IMR-90 (cell line): ENCODE measurements at regions of chr7 and their contacts with region 1.

Region 1: DNA sequence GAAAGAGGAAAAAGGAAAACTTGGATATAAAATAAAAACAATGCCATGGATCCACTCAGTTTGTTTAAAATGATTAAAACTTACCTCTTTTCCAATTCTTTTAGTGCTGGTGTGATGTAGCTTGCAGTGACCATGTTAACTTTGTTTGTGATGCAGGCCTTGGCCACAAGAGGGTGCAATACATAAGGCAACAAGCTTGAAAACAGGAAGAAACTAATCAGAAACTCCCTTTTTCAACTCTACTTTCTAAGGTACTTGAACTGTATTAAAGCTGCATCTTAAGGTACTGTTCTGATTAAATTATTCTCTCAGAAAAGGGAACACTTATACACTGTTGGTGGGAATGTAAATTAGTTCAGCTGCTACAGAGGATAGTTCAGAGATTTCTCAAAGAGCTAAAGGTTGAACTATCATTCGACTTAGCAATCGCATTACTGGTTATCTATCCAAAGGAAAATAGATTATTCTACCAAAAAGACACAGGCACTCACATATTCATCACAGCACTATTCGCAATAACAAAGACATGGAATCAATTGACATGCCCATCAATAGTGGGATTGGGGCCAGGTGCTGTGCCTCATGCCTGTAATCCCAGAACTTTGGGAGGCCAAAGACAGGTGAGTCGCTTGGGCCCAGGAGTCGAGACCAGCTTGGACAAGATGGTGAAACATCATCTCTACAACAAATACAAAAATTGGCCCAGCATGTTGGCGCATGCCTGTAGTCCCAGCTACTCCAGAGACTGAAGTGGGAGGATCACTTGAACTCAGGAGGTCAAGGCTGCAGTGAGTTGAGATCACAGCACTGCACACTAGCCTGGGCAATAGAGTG is 50.9 kb downstream of the AASS start:
- DNase-seq: peak; percentile 82
- ATAC-seq: peak; percentile 82
- H3K4me3 ChIP-seq: no peak overlapping the region
- H3K27ac ChIP-seq: no peak overlapping the region
- H3K4me1 ChIP-seq: no peaks in the 10 kb centered on the region
- H3K27me3 ChIP-seq: no peaks in the 10 kb centered on the region
- CTCF ChIP-seq: peak; percentile 79
- POLR2A ChIP-seq: no peak
- RAD21 ChIP-seq: peak; percentile 73

Region 2: DNA sequence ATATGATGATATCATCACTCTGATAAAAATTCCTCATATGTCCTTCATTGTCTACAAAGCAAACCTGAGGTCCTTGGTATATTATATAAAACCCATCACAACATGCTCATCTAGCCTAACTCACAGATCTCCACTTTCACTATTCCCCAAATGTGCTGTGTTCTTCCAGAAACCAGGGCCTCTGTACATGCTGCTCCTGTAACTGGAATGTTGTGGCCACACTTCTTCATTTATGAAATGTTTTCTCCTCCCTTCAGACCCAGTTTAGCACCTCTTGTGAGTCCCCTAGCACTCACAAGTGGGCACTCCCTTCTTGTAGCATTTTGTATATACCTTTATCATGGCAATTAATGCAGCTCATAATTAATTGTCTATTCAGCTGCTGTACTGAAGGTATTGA is 11.0 kb before region 1 on chr7:
- CTCF ChIA-PET with region 1: interaction called, 12 read pairs
- POLR2A ChIA-PET with region 1: no interaction called
- dilution Hi-C with region 1: no loop called
- in situ Hi-C with region 1: no loop called
- intact Hi-C with region 1: no loop called
- DNase-seq: no peak
- ATAC-seq: no peak
- H3K4me3 ChIP-seq: no peak overlapping the region
- H3K27ac ChIP-seq: no peak overlapping the region
- H3K4me1 ChIP-seq: no peaks in the 10 kb centered on the region
- H3K27me3 ChIP-seq: no peaks in the 10 kb centered on the region
- CTCF ChIP-seq: no peak
- POLR2A ChIP-seq: no peak
- RAD21 ChIP-seq: no peak

Region 3: DNA sequence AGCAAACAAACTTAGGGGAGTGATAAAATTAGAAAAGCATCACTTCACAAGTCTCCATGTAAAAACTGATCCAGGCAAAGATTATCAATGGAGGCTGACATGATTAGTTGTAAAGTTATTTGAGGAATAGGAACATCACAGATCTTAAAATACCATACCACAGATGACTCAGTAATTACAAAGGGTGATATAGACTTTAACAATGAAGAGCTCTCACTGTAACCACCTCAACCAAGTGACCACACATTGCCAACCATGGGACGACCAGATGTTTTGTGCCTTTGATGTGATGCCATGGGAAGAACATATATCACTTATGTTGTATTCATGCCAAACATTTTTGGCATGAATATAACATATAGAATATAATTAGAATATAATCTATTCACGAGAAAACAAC is 39.2 kb after region 1 on chr7:
- CTCF ChIA-PET with region 1: interaction called, 4 read pairs
- POLR2A ChIA-PET with region 1: no interaction called
- dilution Hi-C with region 1: no loop called
- in situ Hi-C with region 1: no loop called
- intact Hi-C with region 1: loop called (anchors 5 kb)
- DNase-seq: peak; percentile 66
- ATAC-seq: peak; percentile 43
- H3K4me3 ChIP-seq: no peak overlapping the region
- H3K27ac ChIP-seq: no peak overlapping the region
- H3K4me1 ChIP-seq: peaks cover 7% of the 10 kb centered on the region
- H3K27me3 ChIP-seq: no peaks in the 10 kb centered on the region
- CTCF ChIP-seq: no peak
- POLR2A ChIP-seq: no peak
- RAD21 ChIP-seq: no peak

Region 4: GRCh38 chr7:122219253-122219865 is 126.2 kb after region 1 on chr7:
- CTCF ChIA-PET with region 1: no interaction called
- POLR2A ChIA-PET with region 1: no interaction called
- dilution Hi-C with region 1: no loop called
- in situ Hi-C with region 1: no loop called
- intact Hi-C with region 1: loop called (anchors 1 kb)
- DNase-seq: peak; percentile 26
- ATAC-seq: peak; percentile 65; the same call in 1 of the 2 replicates
- H3K4me3 ChIP-seq: no peak overlapping the region
- H3K27ac ChIP-seq: no peak overlapping the region
- H3K4me1 ChIP-seq: no peaks in the 10 kb centered on the region
- H3K27me3 ChIP-seq: no peaks in the 10 kb centered on the region
- CTCF ChIP-seq: peak; percentile 68
- POLR2A ChIP-seq: no peak
- RAD21 ChIP-seq: peak; percentile 61

Region 5: DNA sequence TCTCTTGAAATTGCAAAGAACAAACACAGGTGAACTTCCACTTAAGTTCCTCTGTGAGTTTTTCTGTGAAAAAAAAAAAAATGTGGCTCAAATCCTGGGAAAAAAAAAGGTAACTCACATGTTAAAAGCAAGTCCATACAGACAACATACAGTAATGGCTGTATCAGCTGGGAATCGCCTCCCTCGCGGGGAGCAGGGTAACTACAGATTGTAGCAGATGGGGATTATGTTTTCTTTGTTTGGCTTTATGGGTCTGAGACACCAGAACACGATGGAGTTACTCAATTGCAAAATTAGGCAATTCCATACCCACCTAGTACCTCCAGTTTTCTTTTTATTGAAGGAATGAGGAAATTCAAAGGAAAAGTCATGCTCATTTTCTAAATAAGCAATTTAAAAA is 169.1 kb after region 1 on chr7:
- CTCF ChIA-PET with region 1: no interaction called
- POLR2A ChIA-PET with region 1: no interaction called
- dilution Hi-C with region 1: no loop called
- in situ Hi-C with region 1: no loop called
- intact Hi-C with region 1: no loop called
- DNase-seq: no peak
- ATAC-seq: no peak
- H3K4me3 ChIP-seq: no peak overlapping the region
- H3K27ac ChIP-seq: no peak overlapping the region
- H3K4me1 ChIP-seq: no peaks in the 10 kb centered on the region
- H3K27me3 ChIP-seq: no peaks in the 10 kb centered on the region
- CTCF ChIP-seq: no peak
- POLR2A ChIP-seq: no peak
- RAD21 ChIP-seq: no peak

Region 6: GRCh38 chr7:122528879-122529481 is 435.8 kb after region 1 on chr7:
- CTCF ChIA-PET with region 1: interaction called, 5 read pairs
- POLR2A ChIA-PET with region 1: no interaction called
- dilution Hi-C with region 1: no loop called
- in situ Hi-C with region 1: loop called (anchors 10 kb)
- intact Hi-C with region 1: loop called (anchors 2 kb)
- DNase-seq: peak; percentile 37
- ATAC-seq: no peak
- H3K4me3 ChIP-seq: no peak overlapping the region
- H3K27ac ChIP-seq: no peak overlapping the region
- H3K4me1 ChIP-seq: no peaks in the 10 kb centered on the region
- H3K27me3 ChIP-seq: no peaks in the 10 kb centered on the region
- CTCF ChIP-seq: peak; percentile 56
- POLR2A ChIP-seq: no peak
- RAD21 ChIP-seq: peak; percentile 34